ENCODE measurements at regions of chr1 and their contacts with region 1.

Region 1: DNA sequence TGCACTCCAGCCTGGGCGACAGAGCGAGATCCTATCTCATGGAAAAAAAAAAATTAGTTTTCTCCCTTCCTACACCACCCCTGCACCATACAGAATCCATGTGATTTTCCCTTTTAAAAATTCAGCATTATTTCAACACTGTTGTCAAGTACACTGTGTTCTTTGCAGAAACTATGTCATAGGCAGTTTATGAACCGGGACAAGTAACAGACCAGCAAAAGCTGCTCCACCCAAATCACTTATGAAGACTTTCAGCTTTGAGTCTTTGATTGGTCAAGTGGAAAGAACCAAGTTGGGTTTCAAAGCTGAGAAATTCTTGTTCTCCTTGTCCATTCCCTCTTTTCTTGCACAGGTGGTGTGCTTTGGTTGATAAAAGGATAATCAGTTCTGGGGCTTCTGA is 173.0 kb downstream of the CDC7 start:
- DNase-seq: no peak
- ATAC-seq: no peak
- H3K4me3 Mint-ChIP-seq: no peak overlapping the region
- H3K27ac Mint-ChIP-seq: peak overlapping the region; percentile 84
- H3K4me1 Mint-ChIP-seq: peaks cover 34% of the 10 kb centered on the region
- H3K27me3 Mint-ChIP-seq: no peaks in the 10 kb centered on the region

Region 2: GRCh38 chr1:91529856-91530255 is 143.8 kb before region 1 on chr1:
- CTCF ChIA-PET with region 1: no interaction called
- POLR2A ChIA-PET with region 1: no interaction called
- intact Hi-C with region 1: no loop called
- DNase-seq: no peak
- ATAC-seq: no peak
- H3K4me3 Mint-ChIP-seq: no peak overlapping the region
- H3K27ac Mint-ChIP-seq: no peak overlapping the region
- H3K4me1 Mint-ChIP-seq: peaks cover 15% of the 10 kb centered on the region
- H3K27me3 Mint-ChIP-seq: no peaks in the 10 kb centered on the region

Region 3: DNA sequence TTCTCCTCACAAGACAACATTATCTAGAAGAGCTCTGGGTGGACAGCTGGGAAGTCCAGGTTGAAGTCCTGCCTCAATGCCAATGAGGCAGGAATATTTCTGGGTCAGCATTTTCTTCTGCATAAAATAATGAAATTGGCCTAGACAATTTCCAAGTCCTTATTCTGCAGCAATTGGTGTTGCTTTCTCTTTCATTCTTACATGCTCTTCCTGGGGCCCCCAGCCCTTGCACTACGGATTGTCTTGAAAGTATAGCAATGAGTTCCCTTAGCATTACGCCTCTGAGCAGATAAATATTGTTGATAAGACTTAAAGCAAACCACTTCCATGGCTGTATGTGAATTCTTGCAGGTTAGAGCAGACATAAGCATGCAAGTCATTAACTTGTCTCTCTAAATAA is 23.8 kb after region 1 on chr1:
- CTCF ChIA-PET with region 1: no interaction called
- POLR2A ChIA-PET with region 1: no interaction called
- intact Hi-C with region 1: loop called in 1 of 2 experiments (anchors 2 kb)
- DNase-seq: peak; percentile 72
- ATAC-seq: peak; percentile 95
- H3K4me3 Mint-ChIP-seq: peak overlapping the region; percentile 30
- H3K27ac Mint-ChIP-seq: peak overlapping the region; percentile 78
- H3K4me1 Mint-ChIP-seq: peaks cover 33% of the 10 kb centered on the region
- H3K27me3 Mint-ChIP-seq: no peaks in the 10 kb centered on the region

Region 4: DNA sequence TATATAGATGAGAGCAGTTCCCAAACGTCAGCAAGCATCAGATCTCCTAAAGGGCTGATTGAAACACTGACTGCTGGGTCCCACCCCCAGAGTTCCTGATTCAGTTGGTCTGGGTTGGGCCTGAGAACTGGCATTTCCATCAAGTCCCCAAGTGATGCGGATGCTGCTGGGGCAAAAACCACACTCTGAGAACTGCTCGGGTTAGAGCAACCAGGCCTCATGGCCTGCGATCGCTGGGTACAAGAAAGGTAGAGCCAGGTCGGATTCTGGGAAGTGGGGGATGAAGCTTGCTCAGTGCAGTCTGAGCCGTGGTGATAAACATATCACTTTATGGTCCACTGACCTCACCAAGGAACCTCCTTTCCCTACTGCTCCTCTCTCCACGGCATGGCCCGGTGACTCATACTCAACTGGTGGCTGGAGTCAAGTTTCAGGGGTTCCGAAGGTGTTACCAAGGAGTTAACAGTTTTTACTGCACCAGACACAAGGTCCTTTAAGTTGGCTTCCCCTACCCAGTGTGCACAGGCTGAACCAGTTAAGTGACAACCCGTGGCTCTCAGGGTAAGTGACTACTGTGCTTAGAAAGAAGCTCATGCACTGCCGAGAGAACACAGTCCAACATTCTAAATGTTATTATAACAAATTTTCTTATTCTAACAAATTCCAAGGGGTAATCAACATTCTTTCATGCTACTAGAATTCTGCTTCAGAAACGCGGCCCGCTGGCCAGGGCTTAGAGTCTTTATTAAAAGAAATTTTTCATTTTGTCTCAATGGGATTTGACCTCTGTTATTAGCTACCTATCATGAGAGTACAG is 58.9 kb after region 1 on chr1:
- CTCF ChIA-PET with region 1: no interaction called
- POLR2A ChIA-PET with region 1: interaction called, 6 read pairs
- intact Hi-C with region 1: loop called (anchors 1 kb)
- DNase-seq: peak; percentile 58
- ATAC-seq: peak; percentile 47
- H3K4me3 Mint-ChIP-seq: no peak overlapping the region
- H3K27ac Mint-ChIP-seq: peak overlapping the region; percentile 89
- H3K4me1 Mint-ChIP-seq: peaks cover 48% of the 10 kb centered on the region
- H3K27me3 Mint-ChIP-seq: peaks cover 5% of the 10 kb centered on the region